ENCODE measurements at regions of chr3 and their contacts with region 1.

Region 1: DNA sequence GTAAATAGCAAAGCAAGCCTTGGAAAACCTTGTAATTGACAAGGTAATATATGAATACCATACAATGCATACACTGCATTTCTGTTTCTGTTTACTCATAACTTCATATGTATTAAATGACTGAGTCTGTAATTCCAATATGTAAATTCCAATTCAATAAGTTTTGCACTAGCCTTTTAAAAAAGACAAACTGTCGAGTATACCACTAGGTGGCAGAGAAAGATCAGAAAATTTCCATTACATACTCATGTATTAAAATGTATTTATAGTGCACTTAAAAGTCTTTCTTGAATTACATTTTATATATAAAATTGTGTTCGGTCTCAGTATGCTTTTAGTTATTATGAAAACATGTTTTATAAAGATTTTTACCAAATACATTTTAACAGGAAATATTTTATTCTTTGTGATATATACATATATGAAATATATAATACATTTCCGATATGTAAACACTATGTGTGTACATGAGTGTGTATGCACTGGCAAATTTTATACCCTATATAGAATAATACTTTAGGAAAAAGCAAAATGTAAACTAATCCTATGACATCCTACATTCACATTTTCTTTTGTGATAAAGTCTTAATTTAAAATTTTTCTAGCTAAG is 216.8 kb downstream of the VGLL3 start:
- DNase-seq: no peak
- H3K4me3 ChIP-seq: no peak overlapping the region
- CTCF ChIP-seq: peak; percentile 21

Region 2: DNA sequence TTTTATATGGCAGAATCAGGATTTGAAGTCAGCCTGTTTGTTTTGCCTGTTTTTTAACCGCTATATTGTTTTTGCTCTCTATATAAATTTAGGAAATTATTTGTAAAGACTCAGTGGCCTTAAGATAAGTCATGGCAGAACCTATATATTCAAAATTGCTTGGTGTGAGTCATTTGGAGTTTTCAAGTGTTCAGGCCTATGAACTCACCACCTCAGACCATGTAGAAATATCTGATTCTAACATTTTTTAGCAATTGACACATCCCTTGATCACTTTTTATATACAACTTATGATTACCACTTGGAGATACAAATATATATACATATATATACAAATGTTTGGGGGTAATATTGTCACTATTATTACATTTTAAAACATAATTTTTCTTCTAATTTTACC is 121.0 kb after region 1 on chr3:
- CTCF ChIA-PET with region 1: no interaction called
- POLR2A ChIA-PET with region 1: no interaction called
- DNase-seq: peak; percentile 4
- H3K4me3 ChIP-seq: no peak overlapping the region
- CTCF ChIP-seq: no peak

Region 3: DNA sequence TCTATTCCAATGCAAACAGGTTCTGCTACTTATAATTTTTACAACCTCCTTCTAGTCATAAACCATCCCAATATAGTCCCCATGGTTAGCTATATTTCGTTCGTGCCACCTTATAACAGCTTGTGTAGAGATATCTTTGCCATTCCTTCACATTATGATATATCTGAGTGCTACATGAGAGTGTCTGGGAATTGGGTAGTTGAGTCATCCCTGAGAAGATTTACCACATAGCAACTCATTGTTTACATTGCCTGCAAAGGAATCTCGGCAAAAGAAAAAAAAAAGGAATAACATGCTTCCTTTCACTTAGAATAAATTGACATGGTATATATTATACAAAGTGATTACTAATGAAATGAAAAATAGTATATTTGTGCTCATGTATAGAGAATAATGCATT is 302.8 kb after region 1 on chr3:
- CTCF ChIA-PET with region 1: interaction called, 149 read pairs
- POLR2A ChIA-PET with region 1: no interaction called
- DNase-seq: peak; percentile 41
- H3K4me3 ChIP-seq: no peak overlapping the region
- CTCF ChIP-seq: no peak

Region 4: DNA sequence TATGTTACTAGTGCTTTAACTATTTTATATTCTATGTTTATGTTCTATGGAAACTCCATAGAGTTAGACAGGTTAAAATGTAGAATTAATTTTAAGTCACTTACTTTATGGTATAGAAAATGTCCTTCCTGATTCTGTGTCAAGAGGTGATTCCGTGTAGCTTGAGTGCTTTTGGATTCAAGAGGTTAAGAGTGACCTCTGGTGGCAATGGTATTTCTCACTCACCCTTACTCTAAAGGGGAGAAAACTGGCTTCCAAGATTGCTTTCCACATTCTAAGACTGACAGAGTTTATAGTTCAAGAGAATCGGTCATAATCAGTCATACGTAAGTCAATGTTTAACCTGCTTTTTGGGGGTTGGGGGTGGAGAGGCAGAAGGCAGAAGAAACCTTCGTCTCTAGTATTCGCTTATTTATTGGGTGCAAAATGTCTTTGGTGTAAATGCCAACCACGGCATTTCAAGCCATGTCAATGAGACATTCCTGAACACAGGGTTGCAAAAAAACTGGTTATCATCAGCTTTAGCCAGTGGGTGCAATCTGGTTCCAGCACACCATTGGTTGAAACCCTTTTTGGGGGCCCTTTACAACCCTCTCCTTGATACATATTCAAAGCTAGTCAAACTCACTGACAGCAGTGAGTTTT is 308.7 kb after region 1 on chr3:
- CTCF ChIA-PET with region 1: interaction called, 149 read pairs
- POLR2A ChIA-PET with region 1: no interaction called
- DNase-seq: no peak
- H3K4me3 ChIP-seq: no peak overlapping the region
- CTCF ChIP-seq: peak; percentile 61

Region 5: DNA sequence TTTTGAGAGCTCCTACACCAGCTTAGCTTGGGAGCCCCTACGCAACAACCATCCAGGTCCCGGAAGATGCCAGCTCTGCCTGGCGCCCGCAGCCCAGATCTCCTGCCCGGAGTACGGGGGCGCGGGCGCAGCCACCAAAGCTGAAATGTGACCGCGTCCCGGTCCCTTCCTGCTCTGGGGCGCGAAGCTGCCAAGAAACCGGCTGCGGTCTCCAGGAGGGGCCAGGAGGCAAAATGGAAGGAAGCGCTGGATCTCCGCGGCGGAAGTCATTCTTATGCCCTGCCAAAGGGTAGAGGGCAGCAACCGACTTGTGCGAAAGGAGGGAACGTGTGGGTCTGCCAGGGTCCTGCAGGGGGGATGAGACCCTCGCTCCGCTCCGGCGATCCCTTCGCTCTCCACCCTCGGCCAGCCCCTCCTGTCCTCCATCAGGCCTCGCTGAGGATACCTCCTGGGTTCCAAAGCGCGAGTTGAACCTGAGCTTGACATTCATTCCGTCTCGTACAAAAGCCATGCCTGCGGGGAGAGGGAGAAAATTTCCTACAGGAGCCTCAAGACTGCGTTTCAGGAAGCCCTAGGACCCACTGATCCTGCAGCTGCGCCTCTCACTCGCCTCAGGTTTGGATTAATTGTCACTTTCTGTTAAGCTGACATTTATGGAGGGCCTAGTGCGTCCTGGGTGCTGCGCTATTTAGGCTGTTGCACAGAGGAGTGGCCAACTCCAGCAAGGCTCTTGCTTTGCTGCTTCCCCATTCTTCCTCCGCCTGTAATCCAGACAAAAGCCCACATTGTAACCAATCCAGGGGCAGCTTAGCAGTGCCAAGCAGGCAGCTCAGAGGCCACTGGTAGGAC is 315.0 kb after region 1 on chr3:
- CTCF ChIA-PET with region 1: interaction called, 149 read pairs
- POLR2A ChIA-PET with region 1: interaction called, 3 read pairs
- DNase-seq: peak; percentile 50
- H3K4me3 ChIP-seq: peak overlapping the region; percentile 60
- CTCF ChIP-seq: no peak

Region 6: GRCh38 chr3:87145553-87145952 is 371.4 kb after region 1 on chr3:
- CTCF ChIA-PET with region 1: interaction called, 19 read pairs
- POLR2A ChIA-PET with region 1: no interaction called
- DNase-seq: no peak
- H3K4me3 ChIP-seq: no peak overlapping the region
- CTCF ChIP-seq: peak; percentile 25

Region 7: DNA sequence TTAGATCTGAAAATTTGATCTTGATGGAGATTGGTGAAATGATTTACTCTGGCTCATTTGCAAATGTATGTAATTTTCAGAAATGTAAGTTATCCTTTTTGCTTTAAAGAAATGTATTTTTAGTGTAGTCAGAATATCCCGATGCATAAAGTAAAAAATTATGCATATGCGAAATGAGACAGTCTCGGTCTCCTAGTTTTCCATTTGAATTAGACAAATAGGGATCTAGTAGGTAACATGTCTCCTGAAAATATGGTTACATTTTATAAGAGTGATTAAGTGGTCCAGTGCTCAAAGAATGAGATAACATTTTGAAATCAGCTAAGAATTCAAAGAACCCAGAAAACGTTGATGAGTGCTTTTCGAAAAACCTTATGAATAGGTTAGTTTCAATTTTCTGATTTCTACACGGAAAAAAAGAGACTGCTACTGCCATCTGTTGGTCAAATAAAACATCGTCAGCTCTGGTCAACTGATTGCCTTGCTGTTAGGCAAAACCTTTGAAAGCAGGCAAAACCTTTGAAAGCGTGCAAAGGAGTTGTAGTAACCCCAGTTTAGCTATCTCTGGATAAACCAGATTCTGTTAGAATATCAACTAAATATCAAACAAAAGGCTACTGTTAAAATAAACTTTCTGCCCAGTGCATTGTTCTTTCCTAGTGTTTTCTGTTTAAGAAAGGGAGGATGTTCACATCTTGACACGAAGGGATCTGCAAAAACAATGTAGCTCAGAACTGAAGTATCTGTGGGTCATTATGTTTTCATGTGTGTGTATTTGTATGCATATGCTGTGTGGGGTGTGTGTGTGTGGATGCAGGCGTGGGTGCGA is 393.7 kb after region 1 on chr3:
- CTCF ChIA-PET with region 1: interaction called, 108 read pairs
- POLR2A ChIA-PET with region 1: no interaction called
- DNase-seq: no peak
- H3K4me3 ChIP-seq: peak overlapping the region; percentile 37
- CTCF ChIP-seq: peak; percentile 52

Measured in AG04449 (cell line).